ENCODE measurements at regions of chr11 and their contacts with region 1.

Region 1: GRCh38 chr11:20110908-20111669 is 49.2 kb downstream of the DBX1 start:
- DNase-seq: peak in 4 of 5 donors; percentile 66 to 77 (median 69)
- H3K4me3 ChIP-seq: no peak overlapping the region
- H3K27ac ChIP-seq: peak overlapping the region in 1 of 2 donors; percentile 4
- H3K4me1 ChIP-seq: peaks cover 0 to 9% (median 0%) of the 10 kb centered on the region in 3 donors
- H3K27me3 ChIP-seq: no peaks in the 10 kb centered on the region
- CTCF ChIP-seq: peak; percentile 72

Region 2: GRCh38 chr11:19934828-19935259 is 176.2 kb before region 1 on chr11:
- intact Hi-C with region 1: no loop called
- DNase-seq: no peak
- H3K4me3 ChIP-seq: no peak overlapping the region
- H3K27ac ChIP-seq: no peak overlapping the region
- H3K4me1 ChIP-seq: peaks cover 0 to 2% (median 0%) of the 10 kb centered on the region in 3 donors
- H3K27me3 ChIP-seq: no peaks in the 10 kb centered on the region
- CTCF ChIP-seq: no peak

Region 3: DNA sequence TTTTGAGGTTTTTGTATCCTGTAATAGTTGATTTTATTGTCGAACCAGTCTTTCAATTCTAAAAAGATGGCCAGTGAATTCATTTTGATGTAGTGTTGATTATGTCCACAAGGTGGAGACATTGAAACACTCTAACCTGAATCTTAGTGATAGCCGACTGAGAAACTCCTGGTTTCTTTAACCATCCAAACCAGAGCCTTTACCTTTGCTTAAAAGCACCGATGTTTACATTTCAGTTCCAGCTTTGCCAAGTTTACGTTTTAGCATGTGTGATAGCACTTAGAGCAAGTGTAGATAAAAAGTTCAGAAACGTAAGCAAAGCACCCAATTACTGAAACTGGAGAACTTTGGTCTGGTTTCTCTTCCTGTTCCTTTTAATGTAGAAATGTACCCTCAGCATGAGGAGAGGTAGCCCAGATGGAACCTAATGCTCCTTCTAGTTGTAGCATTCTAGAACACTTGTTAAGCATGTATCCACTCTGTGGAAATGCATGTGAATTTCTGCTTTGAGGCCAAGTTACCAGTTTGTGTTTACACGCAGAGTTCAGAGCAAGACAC is 159.5 kb before region 1 on chr11:
- intact Hi-C with region 1: loop called (anchors 10 kb)
- DNase-seq: peak in 2 of 5 donors; percentile 86 to 89
- H3K4me3 ChIP-seq: peak overlapping the region in 1 of 3 donors; percentile 32
- H3K27ac ChIP-seq: no peak overlapping the region
- H3K4me1 ChIP-seq: peaks cover 0 to 3% (median 2%) of the 10 kb centered on the region in 3 donors
- H3K27me3 ChIP-seq: no peaks in the 10 kb centered on the region
- CTCF ChIP-seq: peak; percentile 57

Region 4: GRCh38 chr11:19995131-19995530 is 116.0 kb before region 1 on chr11:
- intact Hi-C with region 1: no loop called
- DNase-seq: peak in 1 of 5 donors; percentile 45
- H3K4me3 ChIP-seq: no peak overlapping the region
- H3K27ac ChIP-seq: no peak overlapping the region
- H3K4me1 ChIP-seq: no peaks in the 10 kb centered on the region
- H3K27me3 ChIP-seq: no peaks in the 10 kb centered on the region
- CTCF ChIP-seq: no peak

Measured in kidney (tissue), 22 donors.